HCT116 (cell line): ENCODE measurements at regions of chr21 and their contacts with region 1.

Region 1: GRCh38 chr21:39349211-39350093 is 564 bp upstream of the HMGN1 start:
- DNase-seq: peak; percentile 89
- ATAC-seq: peak; percentile 87
- H3K4me3 ChIP-seq: peak overlapping the region; percentile 57 to 59
- H3K27ac ChIP-seq: peak overlapping the region; percentile 96
- H3K4me1 ChIP-seq: peaks cover 5 to 22% of the 10 kb centered on the region in 2 experiments
- H3K27me3 ChIP-seq: no peaks in the 10 kb centered on the region
- CTCF ChIP-seq: no peak
- POLR2A ChIP-seq: no peak
- RAD21 ChIP-seq: no peak

Region 2: DNA sequence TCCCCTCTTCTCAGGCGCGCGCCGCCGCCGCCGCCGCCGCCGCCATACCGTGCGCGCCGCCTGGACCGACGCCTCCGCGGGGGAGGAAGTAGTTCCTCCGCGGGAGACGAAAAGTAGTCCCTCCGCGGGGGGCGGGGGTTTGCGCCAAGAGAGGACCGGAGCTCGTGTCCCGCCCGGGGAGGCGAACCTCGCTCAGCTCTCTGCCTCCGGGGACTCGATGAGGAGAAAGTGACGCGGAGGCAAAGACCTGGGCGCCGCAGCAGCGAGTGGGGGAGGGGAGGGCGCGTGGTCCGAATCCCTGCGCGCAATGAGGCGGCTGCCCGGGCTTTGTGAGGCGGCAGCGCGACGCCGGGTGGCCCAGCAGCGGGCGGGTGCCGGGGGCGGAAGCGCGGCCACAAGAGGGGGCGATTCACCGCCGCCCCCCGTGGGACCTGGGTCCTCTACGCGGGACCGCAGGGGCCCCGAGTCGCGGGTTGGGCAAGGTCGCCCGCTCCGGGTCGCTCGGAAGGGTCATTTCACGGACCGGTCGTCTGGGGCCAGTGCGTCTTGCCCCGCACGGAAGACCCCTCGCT is 35.8 kb before region 1 on chr21 and contains the start of gene BRWD1:
- CTCF ChIA-PET with region 1: no interaction called
- POLR2A ChIA-PET with region 1: interaction called, 3 read pairs
- RAD21 ChIA-PET with region 1: no interaction called
- intact Hi-C with region 1: loop called (anchors 5 kb)
- DNase-seq: peak; percentile 58
- ATAC-seq: peak; percentile 65
- H3K4me3 ChIP-seq: peak within 1 kb of the TSS; percentile 51 to 71
- H3K27ac ChIP-seq: peak within 1 kb of the TSS; percentile 70
- H3K4me1 ChIP-seq: peaks cover 10 to 19% of the 10 kb centered on the region in 2 experiments; a peak in 3 of 4 replicates
- H3K27me3 ChIP-seq: no peaks in the 10 kb centered on the region
- CTCF ChIP-seq: no peak
- POLR2A ChIP-seq: peak; percentile 62
- RAD21 ChIP-seq: 0 out of 2 replicates have a peak, but pooled peaks have one; percentile 18
- total RNA-seq, gene BRWD1: 33.1 TPM

Region 3: GRCh38 chr21:39379986-39380891 is 30.8 kb after region 1 on chr21:
- CTCF ChIA-PET with region 1: no interaction called
- POLR2A ChIA-PET with region 1: interaction called, 3 read pairs
- RAD21 ChIA-PET with region 1: no interaction called
- intact Hi-C with region 1: loop called (anchors 2 kb)
- DNase-seq: peak; percentile 81
- ATAC-seq: peak; percentile 96
- H3K4me3 ChIP-seq: peak overlapping the region; percentile 78 to 95
- H3K27ac ChIP-seq: peak overlapping the region; percentile 47
- H3K4me1 ChIP-seq: peaks cover 10 to 23% of the 10 kb centered on the region in 2 experiments; a peak in 3 of 4 replicates
- H3K27me3 ChIP-seq: no peaks in the 10 kb centered on the region
- CTCF ChIP-seq: no peak
- POLR2A ChIP-seq: peak; percentile 62
- RAD21 ChIP-seq: no peak

Region 4: DNA sequence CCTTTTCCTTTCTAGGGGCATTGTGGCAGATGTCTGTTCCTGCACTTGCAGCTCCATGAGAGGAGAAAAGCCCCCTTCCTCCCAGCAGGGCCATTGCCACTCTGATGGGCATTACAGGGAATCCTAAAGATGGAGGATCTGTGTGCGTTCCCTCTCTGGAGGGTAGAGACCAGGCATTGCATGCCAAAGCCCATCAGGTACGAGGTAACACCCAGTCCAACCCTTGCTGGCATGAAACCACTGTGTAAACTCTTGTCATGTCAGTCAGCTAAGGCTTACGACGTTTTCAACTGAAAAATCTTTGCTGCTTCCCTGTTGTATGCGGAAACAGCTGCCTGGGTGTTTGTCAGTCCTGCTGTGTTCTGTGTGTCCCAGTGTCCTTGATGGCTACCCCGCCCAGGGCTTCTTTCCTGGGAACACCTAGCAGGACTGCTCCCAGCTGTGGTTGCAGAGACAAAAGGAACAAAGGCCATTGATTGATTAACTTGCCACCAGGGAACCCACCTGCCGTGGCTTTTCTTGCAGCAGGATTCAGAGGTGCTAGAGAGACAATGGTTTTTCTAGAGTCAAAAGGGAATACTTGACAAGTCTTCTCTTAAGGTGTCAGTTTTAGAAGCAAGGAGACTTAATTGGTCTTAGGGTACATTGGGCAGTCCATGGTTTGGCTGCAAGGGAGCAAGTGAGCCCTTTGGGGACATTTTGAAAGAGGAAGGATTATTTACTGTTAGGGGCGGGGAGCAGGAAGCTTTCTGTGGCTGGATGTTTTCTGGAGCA is 287.9 kb after region 1 on chr21:
- CTCF ChIA-PET with region 1: no interaction called
- POLR2A ChIA-PET with region 1: no interaction called
- RAD21 ChIA-PET with region 1: no interaction called
- intact Hi-C with region 1: no loop called
- DNase-seq: no peak
- ATAC-seq: no peak
- H3K4me3 ChIP-seq: no peak overlapping the region
- H3K27ac ChIP-seq: no peak overlapping the region
- H3K4me1 ChIP-seq: peaks cover 26 to 49% of the 10 kb centered on the region in 2 experiments
- H3K27me3 ChIP-seq: no peaks in the 10 kb centered on the region
- CTCF ChIP-seq: no peak
- POLR2A ChIP-seq: no peak
- RAD21 ChIP-seq: no peak